ENCODE measurements at regions of chr3 and their contacts with region 1.

Region 1: GRCh38 chr3:9792405-9793160 is at the starts of genes ARPC4 and TADA3:
- DNase-seq: peak; percentile 90
- ATAC-seq: peak; percentile 93
- H3K4me3 ChIP-seq: peak within 1 kb of the TSS; percentile 72 to 93 (median 93)
- H3K27ac ChIP-seq: peak within 1 kb of the TSS; percentile 97
- H3K4me1 ChIP-seq: peaks cover 28% of the 10 kb centered on the region
- H3K27me3 ChIP-seq: peaks cover 0 to 5% of the 10 kb centered on the region in 2 experiments; a peak in 1 of 5 replicates
- CTCF ChIP-seq: no peak
- EP300 ChIP-seq: no peak
- POLR2A ChIP-seq: peak; percentile 52
- RAD21 ChIP-seq: peak; percentile 30; the same call in 1 of the 2 replicates
- total RNA-seq, gene ARPC4: 73.9 and 83.6 TPM in 2 replicates
- total RNA-seq, gene TADA3: 37.1 and 43.3 TPM in 2 replicates

Region 2: DNA sequence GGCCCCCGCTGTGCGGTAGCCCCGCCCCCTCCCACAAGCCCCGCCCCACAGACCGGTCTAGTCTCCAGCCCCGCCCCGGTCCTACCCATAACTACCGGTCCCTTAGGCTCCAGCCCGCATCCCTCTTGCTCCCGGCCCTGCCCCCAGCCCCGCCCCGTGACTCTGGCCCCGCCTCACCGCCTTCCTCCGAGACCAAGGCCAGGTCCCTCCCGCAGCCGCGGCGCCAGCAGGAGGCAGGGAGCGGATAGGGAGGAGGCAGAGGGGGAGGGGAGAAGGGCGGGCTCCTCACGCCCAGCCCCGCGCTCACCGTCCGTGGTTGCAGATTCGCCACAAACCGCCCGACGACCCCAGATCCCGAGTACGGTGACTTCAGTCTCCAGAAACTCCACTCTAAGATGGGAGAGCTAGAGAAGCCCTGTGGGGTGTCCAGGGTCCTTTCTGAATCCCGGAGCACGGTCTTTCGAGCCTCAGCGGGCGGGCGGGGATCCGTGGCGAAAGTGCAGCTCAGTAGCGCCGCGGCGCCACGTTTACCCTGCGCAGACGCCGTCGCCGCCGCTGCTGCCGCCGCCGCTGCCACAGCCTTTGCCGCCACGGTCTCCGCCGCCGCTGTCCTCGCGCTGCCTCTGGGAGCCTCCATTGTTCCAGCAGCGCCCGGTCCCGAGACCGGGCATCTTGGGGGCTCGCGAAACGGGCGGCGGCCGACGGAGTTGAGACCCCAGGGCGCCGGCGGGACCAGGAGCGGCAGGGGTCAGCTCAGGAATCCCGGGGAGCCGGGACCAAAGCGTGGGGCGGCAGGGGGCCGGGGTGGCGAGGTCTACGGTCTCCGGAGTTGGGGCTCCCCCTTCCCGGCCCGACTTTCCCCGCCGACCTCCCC is 61.1 kb before region 1 on chr3 and contains the start of gene BRPF1:
- CTCF ChIA-PET with region 1: no interaction called
- POLR2A ChIA-PET with region 1: interaction called, 18 read pairs
- in situ Hi-C with region 1: no loop called
- intact Hi-C with region 1: loop called (anchors 2 kb)
- DNase-seq: peak; percentile 95
- ATAC-seq: peak; percentile 95
- H3K4me3 ChIP-seq: peak within 1 kb of the TSS; percentile 89 to 99 (median 96)
- H3K27ac ChIP-seq: peak within 1 kb of the TSS; percentile 99
- H3K4me1 ChIP-seq: peaks cover 31% of the 10 kb centered on the region
- H3K27me3 ChIP-seq: no peaks in the 10 kb centered on the region; a peak in 1 of 5 replicates
- CTCF ChIP-seq: peak; percentile 43
- EP300 ChIP-seq: peak in 1 of 2 experiments; percentile 42; a peak in 1 of 4 replicates
- POLR2A ChIP-seq: peak; percentile 55 to 71
- RAD21 ChIP-seq: 0 out of 2 replicates have a peak, but pooled peaks have one; percentile 35
- total RNA-seq, gene BRPF1: 7.5 and 10.0 TPM in 2 replicates

Region 3: DNA sequence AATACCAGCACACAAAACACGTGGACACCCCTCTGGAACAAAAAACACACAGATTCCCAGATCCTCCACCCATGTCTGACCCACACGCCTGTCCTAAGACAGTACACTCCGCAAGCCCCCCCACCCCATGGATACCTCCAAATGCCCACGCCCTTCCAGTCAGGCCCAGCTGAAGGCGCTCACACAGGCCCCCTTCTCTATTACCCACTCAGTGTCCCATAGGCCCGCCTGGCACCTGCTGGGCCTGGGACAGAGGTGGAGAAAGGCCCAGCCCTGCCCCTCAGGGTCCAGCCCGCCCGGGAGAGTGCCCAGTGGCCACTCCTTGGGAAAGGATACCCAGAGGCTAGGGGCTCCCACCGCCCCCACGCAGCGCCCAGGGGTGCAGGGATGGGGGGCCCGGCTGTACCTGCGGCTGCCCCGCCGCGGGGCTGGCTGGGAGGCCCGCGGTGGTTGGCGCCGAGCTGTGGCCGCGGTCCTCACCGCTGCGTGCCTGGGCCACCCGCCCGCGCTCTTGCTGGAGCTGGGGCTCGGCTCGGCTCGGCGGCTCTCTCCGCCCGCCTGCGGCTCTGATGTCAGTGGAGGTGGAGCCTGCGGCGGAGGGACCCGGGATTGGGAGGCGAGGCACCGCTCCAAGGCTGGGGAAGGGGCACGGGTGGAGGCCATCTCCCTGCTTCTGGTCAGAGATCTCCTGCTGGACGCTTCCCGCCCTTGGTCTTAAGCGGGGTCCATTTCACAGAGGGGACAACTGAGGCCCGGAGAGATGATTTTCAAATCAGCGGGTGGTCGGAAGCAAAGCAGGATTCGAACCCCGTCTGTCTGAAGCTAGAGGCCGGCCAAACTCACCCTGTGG is 22.9 kb before region 1 on chr3 and contains the start of gene CAMK1:
- CTCF ChIA-PET with region 1: no interaction called
- POLR2A ChIA-PET with region 1: interaction called, 33 read pairs
- in situ Hi-C with region 1: no loop called
- intact Hi-C with region 1: no loop called
- DNase-seq: peak; percentile 45
- ATAC-seq: peak; percentile 91
- H3K4me3 ChIP-seq: peak within 1 kb of the TSS; percentile 68 to 92 (median 76)
- H3K27ac ChIP-seq: peak within 1 kb of the TSS; percentile 57
- H3K4me1 ChIP-seq: peaks cover 39% of the 10 kb centered on the region
- H3K27me3 ChIP-seq: no peaks in the 10 kb centered on the region; a peak in 1 of 5 replicates
- CTCF ChIP-seq: no peak; the same call in 1 of the 2 replicates
- EP300 ChIP-seq: no peak
- POLR2A ChIP-seq: peak in 1 of 2 experiments; percentile 79; a peak in 2 of 4 replicates
- RAD21 ChIP-seq: 0 out of 2 replicates have a peak, but pooled peaks have one; percentile 12
- total RNA-seq, gene CAMK1: 51.8 and 53.3 TPM in 2 replicates

Region 4: DNA sequence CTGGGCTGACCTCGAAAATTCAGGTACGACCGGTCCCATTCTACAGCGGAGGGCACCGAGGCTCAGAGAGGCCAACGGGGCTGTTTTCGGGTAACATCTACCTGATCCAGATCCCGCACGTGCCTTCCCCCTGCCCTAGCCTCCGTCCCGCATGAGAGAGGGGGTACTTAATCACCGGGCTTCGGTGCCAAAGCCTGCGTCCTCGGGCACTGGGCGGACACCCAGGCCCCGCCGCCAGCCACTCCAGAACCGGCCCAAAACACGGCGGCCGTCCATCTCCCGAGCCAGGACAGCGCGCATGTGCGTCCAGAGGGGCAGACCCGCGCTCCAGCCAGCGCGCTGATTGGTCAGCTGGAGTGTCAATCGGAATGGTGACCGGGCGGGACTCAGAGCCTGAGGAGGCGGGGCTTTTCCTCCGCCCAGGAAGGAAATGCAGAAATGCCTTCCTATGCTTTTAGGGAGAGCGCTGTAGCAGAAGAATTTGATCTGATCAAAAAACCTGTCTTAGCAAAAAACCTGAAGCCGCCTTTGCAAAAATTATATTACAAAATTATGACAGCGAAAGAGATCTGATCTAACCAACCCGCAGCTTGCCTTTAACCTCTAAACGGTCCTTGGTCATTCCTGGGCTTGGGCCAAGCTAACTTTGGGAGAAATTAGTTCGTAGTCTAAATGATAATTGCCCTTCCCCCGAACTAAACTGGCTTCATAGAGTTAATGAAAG is 51.3 kb after region 1 on chr3 and contains the start of gene RPUSD3:
- CTCF ChIA-PET with region 1: no interaction called
- POLR2A ChIA-PET with region 1: interaction called, 10 read pairs
- in situ Hi-C with region 1: no loop called
- intact Hi-C with region 1: no loop called
- DNase-seq: peak; percentile 82
- ATAC-seq: peak; percentile 98
- H3K4me3 ChIP-seq: peak within 1 kb of the TSS; percentile 74 to 94 (median 87)
- H3K27ac ChIP-seq: peak within 1 kb of the TSS; percentile 56
- H3K4me1 ChIP-seq: peaks cover 22% of the 10 kb centered on the region
- H3K27me3 ChIP-seq: no peaks in the 10 kb centered on the region; a peak in 1 of 5 replicates
- CTCF ChIP-seq: 0 out of 2 replicates have a peak, but pooled peaks have one; percentile 3
- EP300 ChIP-seq: no peak
- POLR2A ChIP-seq: peak in 1 of 2 experiments; percentile 86; a peak in 3 of 4 replicates
- RAD21 ChIP-seq: no peak
- total RNA-seq, gene RPUSD3: 30.3 and 32.1 TPM in 2 replicates

Region 5: GRCh38 chr3:9915254-9916141 is 122.9 kb after region 1 on chr3:
- CTCF ChIA-PET with region 1: no interaction called
- POLR2A ChIA-PET with region 1: interaction called, 10 read pairs
- in situ Hi-C with region 1: no loop called
- intact Hi-C with region 1: no loop called
- DNase-seq: peak; percentile 36
- ATAC-seq: peak; percentile 52
- H3K4me3 ChIP-seq: peak overlapping the region; percentile 55 to 86 (median 83); a peak in 5 of 6 replicates
- H3K27ac ChIP-seq: peak overlapping the region; percentile 90
- H3K4me1 ChIP-seq: peaks cover 38% of the 10 kb centered on the region
- H3K27me3 ChIP-seq: no peaks in the 10 kb centered on the region
- CTCF ChIP-seq: peak; percentile 53; the same call in 1 of the 2 replicates
- EP300 ChIP-seq: no peak
- POLR2A ChIP-seq: no peak; a peak in 1 of 4 replicates
- RAD21 ChIP-seq: peak; percentile 89